ENCODE measurements at regions of chr17 and their contacts with region 1.

Region 1: GRCh38 chr17:66165513-66166123 is 26.3 kb downstream of the CEP112 start:
- DNase-seq: peak in 4 of 14 experiments; percentile 29 to 74 (median 66)
- ATAC-seq: no peak
- H3K4me3 ChIP-seq: no peak overlapping the region
- H3K4me3 Mint-ChIP-seq: no peak overlapping the region
- H3K27ac ChIP-seq: no peak overlapping the region
- H3K27ac Mint-ChIP-seq: no peak overlapping the region
- H3K4me1 ChIP-seq: no peaks in the 10 kb centered on the region
- H3K4me1 Mint-ChIP-seq: peaks cover 10% of the 10 kb centered on the region
- H3K27me3 ChIP-seq: no peaks in the 10 kb centered on the region
- H3K27me3 Mint-ChIP-seq: no peaks in the 10 kb centered on the region
- CTCF ChIP-seq: peak; percentile 86

Region 2: DNA sequence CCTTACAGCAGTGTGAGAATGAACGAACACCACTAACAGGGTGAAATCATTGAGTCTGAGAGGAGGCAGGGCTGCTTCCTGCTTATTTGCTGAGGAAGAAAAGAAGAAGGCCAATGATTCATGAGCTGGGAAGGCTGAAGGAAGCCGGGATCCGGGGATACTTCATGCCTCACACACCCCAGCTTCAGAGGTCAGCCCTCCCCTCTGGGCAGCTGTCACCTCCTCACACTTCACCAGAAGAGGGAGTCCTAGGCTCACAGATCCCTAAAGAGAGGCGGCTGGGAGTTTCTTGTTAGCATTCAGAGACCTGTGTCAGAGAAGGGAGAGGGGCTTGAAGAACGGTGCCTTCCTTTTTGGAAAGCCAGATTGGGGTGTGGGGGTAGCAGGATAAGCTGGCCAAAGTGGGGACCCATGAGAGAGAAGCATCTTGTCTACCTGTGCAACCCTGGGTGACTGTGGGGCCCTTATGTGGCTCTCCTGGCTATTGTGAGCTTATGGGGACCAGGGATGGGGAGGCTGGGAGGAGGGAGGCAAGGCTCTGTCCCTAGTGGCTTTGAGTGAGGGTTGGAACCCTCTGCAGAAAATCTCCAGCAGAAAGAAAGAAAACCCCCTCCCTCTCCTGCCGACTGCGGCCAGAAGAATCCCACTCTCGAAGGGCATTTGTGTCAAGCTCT is 933.8 kb before region 1 on chr17:
- CTCF ChIA-PET with region 1: interaction called, 14 read pairs
- POLR2A ChIA-PET with region 1: no interaction called
- intact Hi-C with region 1: loop called (anchors 1 to 2 kb)
- DNase-seq: peak in 12 of 14 experiments; percentile 5 to 70 (median 20)
- ATAC-seq: no peak
- H3K4me3 ChIP-seq: no peak overlapping the region
- H3K4me3 Mint-ChIP-seq: no peak overlapping the region
- H3K27ac ChIP-seq: no peak overlapping the region
- H3K27ac Mint-ChIP-seq: no peak overlapping the region
- H3K4me1 ChIP-seq: peaks cover 29% of the 10 kb centered on the region
- H3K4me1 Mint-ChIP-seq: peaks cover 19% of the 10 kb centered on the region
- H3K27me3 ChIP-seq: no peaks in the 10 kb centered on the region
- H3K27me3 Mint-ChIP-seq: no peaks in the 10 kb centered on the region
- CTCF ChIP-seq: peak; percentile 41

Region 3: DNA sequence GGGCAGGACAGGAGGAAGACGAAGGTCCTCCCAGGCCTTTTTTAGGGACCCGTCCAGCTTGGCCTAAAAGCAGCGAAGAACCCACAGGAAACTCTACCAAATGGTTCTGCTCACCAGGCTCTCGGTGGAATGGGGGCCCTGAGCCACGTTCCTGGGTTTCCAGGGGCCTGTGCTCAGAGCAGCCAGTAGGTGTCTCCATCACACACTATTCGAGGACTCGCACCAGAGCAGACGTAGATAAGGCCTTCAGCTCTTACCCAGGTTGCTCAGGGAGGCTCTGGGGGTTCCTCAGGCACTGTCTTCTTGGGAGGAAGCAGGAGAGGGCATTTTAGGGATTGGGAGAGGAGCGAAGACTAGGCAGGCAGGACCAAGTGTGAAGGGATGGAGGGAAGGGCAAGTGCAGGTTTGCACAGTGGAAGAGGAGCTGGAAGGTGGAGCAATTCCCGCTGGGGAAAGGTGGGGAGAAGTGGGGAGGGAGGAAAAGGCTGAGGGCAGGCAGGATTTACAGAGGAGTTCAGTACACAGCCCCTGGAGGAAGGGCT is 871.4 kb before region 1 on chr17:
- CTCF ChIA-PET with region 1: interaction called, 15 read pairs
- POLR2A ChIA-PET with region 1: no interaction called
- intact Hi-C with region 1: loop called (anchors 1 kb)
- DNase-seq: peak; percentile 32 to 78 (median 50)
- ATAC-seq: peak; percentile 88
- H3K4me3 ChIP-seq: no peak overlapping the region
- H3K4me3 Mint-ChIP-seq: no peak overlapping the region
- H3K27ac ChIP-seq: no peak overlapping the region
- H3K27ac Mint-ChIP-seq: no peak overlapping the region
- H3K4me1 ChIP-seq: peaks cover 7% of the 10 kb centered on the region
- H3K4me1 Mint-ChIP-seq: peaks cover 5% of the 10 kb centered on the region
- H3K27me3 ChIP-seq: no peaks in the 10 kb centered on the region
- H3K27me3 Mint-ChIP-seq: peaks cover 3% of the 10 kb centered on the region
- CTCF ChIP-seq: peak; percentile 76

Region 4: GRCh38 chr17:65455972-65456343 is 709.7 kb before region 1 on chr17:
- CTCF ChIA-PET with region 1: no interaction called
- POLR2A ChIA-PET with region 1: no interaction called
- intact Hi-C with region 1: loop called (anchors 2 kb)
- DNase-seq: peak in 13 of 14 experiments; percentile 5 to 64 (median 12)
- ATAC-seq: peak; percentile 61
- H3K4me3 ChIP-seq: no peak overlapping the region
- H3K4me3 Mint-ChIP-seq: no peak overlapping the region
- H3K27ac ChIP-seq: no peak overlapping the region
- H3K27ac Mint-ChIP-seq: no peak overlapping the region
- H3K4me1 ChIP-seq: peaks cover 7% of the 10 kb centered on the region
- H3K4me1 Mint-ChIP-seq: no peaks in the 10 kb centered on the region
- H3K27me3 ChIP-seq: peaks cover 0 to 3% of the 10 kb centered on the region in 2 experiments
- H3K27me3 Mint-ChIP-seq: no peaks in the 10 kb centered on the region
- CTCF ChIP-seq: peak; percentile 45